IMR-90 (cell line): ENCODE measurements at regions of chr2 and their contacts with region 1.

Region 1: DNA sequence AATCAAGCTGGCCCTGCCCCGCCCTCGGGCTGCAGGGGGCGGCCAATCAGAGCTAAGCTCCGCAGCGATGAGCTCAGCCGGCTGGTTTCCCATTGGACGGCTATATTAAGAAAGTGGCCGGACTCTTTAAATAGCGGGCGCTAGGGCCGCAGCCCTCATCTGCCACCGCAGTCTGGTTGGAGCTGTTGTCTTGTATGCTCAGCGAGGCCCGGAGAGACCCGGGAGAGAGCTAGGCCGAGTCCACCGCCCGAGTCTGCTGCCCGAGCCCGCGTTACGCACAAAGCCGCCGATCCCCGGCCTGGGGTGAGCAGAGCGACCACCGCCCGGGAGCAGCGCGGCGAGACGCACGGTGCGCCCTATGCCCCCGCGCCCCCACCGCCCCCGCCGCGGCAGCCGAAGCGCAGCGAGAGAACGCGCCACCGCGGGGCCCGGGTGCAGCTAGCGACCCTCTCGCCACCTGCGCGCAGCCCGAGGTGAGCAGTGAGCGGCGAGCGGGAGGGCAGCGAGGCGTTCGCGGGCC is at the start of gene RHOB:
- DNase-seq: peak; percentile 98
- ATAC-seq: peak; percentile 88
- H3K4me3 ChIP-seq: peak within 1 kb of the TSS; percentile 86
- H3K27ac ChIP-seq: peak within 1 kb of the TSS; percentile 88
- H3K4me1 ChIP-seq: peaks cover 14% of the 10 kb centered on the region
- H3K27me3 ChIP-seq: no peaks in the 10 kb centered on the region
- CTCF ChIP-seq: no peak
- POLR2A ChIP-seq: peak; percentile 100
- RAD21 ChIP-seq: no peak
- total RNA-seq, gene RHOB: 112 and 151 TPM in 2 replicates

Region 2: GRCh38 chr2:19673213-19673791 is 773.7 kb before region 1 on chr2:
- CTCF ChIA-PET with region 1: no interaction called
- POLR2A ChIA-PET with region 1: no interaction called
- dilution Hi-C with region 1: no loop called
- in situ Hi-C with region 1: no loop called
- intact Hi-C with region 1: no loop called
- DNase-seq: peak; percentile 19
- ATAC-seq: peak; percentile 49; the same call in 1 of the 2 replicates
- H3K4me3 ChIP-seq: no peak overlapping the region
- H3K27ac ChIP-seq: no peak overlapping the region
- H3K4me1 ChIP-seq: no peaks in the 10 kb centered on the region
- H3K27me3 ChIP-seq: peaks cover 5% of the 10 kb centered on the region
- CTCF ChIP-seq: no peak
- POLR2A ChIP-seq: no peak
- RAD21 ChIP-seq: no peak

Region 3: DNA sequence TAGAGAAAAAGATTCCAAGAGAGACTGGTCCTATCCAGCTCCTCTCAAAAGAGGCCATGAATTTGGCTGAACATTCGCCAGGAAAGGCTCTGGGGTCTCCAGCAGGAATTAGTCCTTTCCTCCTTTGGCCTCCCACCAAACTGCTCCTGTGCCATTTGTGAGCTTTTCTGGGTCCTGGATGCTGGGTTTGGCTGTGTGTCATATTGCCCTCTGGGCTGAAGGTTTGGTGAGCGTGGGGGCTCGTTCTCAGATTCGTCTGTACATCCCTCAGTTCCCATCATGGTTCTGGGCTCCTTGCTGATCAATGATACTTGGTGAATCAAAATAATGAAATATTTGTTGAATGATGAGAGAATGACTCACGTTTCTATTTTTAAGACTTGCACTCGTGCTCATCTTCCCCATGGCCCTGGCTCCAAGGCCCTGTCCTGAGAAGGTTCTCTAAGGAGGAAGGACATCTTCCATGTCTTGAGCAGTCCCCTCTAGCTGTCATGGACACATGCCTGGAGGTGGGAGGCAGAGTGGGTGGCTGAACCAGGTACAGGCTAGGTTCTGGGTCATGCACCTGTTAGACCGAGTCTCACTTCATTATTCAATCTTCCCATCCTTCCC is 47.9 kb before region 1 on chr2:
- CTCF ChIA-PET with region 1: interaction called, 3 read pairs
- POLR2A ChIA-PET with region 1: interaction called, 14 read pairs
- dilution Hi-C with region 1: no loop called
- in situ Hi-C with region 1: no loop called
- intact Hi-C with region 1: no loop called
- DNase-seq: peak; percentile 68
- ATAC-seq: peak; percentile 63
- H3K4me3 ChIP-seq: no peak overlapping the region
- H3K27ac ChIP-seq: no peak overlapping the region
- H3K4me1 ChIP-seq: peaks cover 4% of the 10 kb centered on the region
- H3K27me3 ChIP-seq: peaks cover 7% of the 10 kb centered on the region; the same call in 1 of the 2 replicates
- CTCF ChIP-seq: no peak
- POLR2A ChIP-seq: no peak
- RAD21 ChIP-seq: no peak

Region 4: GRCh38 chr2:20490260-20491181 is 43.5 kb after region 1 on chr2:
- CTCF ChIA-PET with region 1: interaction called, 3 read pairs
- POLR2A ChIA-PET with region 1: interaction called, 5 read pairs
- dilution Hi-C with region 1: no loop called
- in situ Hi-C with region 1: loop called (anchors 5 kb)
- intact Hi-C with region 1: loop called (anchors 2 kb)
- DNase-seq: peak; percentile 72
- ATAC-seq: no peak
- H3K4me3 ChIP-seq: no peak overlapping the region
- H3K27ac ChIP-seq: no peak overlapping the region
- H3K4me1 ChIP-seq: peaks cover 10% of the 10 kb centered on the region
- H3K27me3 ChIP-seq: peaks cover 3% of the 10 kb centered on the region
- CTCF ChIP-seq: no peak
- POLR2A ChIP-seq: no peak
- RAD21 ChIP-seq: no peak

Region 5: GRCh38 chr2:20600756-20601325 is 153.9 kb after region 1 on chr2:
- CTCF ChIA-PET with region 1: interaction called, 3 read pairs
- POLR2A ChIA-PET with region 1: interaction called, 10 read pairs
- dilution Hi-C with region 1: no loop called
- in situ Hi-C with region 1: no loop called
- intact Hi-C with region 1: loop called (anchors 2 kb)
- DNase-seq: no peak
- ATAC-seq: no peak; the same call in 1 of the 2 replicates
- H3K4me3 ChIP-seq: no peak overlapping the region
- H3K27ac ChIP-seq: no peak overlapping the region
- H3K4me1 ChIP-seq: peaks cover 11% of the 10 kb centered on the region
- H3K27me3 ChIP-seq: no peaks in the 10 kb centered on the region
- CTCF ChIP-seq: peak; percentile 54
- POLR2A ChIP-seq: no peak
- RAD21 ChIP-seq: peak; percentile 49

Region 6: DNA sequence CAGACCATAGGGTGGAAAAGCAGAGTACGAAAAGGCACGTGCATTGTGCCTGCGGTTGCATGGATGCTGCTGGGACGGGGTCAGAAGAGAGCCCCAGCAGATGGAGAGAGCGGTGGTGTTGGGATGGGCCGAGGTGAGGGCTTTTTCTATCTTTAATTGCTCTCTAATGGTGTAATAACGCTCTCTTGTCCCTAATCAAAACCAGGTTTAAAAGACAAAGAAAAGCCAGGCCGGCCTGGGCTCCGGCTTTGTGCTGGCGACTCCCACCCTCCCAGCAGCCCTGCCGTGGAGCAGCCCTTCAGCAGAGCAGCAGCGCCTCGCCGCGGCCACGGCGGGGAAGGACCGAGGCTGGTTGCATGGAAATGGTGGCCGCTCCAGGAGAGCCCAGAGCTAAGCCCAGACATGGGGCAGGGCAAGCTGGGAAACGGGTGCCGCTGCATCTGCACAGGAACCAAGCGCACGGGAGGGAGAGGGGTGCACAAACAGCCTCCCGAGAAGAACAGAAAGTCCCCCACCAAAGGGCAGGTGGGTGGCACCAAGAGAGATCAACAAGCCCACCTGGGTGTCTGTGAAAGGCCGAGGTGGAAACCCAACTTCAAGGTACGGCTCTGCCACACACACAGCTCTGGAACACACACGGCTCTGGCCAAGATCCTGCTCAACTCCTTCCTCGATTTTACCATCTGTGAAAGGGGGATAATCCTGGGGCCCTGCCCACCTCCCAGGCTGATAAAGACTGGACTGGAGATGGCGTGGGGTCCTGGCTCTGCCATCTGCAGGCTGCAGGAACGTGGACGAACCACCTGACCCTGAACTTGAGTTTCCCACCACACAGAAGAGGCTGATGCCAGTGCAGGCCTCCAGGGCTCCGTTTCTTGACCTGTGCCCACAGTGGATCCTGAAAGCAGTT is 189.0 kb after region 1 on chr2:
- CTCF ChIA-PET with region 1: interaction called, 17 read pairs
- POLR2A ChIA-PET with region 1: interaction called, 10 read pairs
- dilution Hi-C with region 1: no loop called
- in situ Hi-C with region 1: loop called (anchors 5 kb)
- intact Hi-C with region 1: loop called (anchors 1 kb)
- DNase-seq: peak; percentile 71
- ATAC-seq: peak; percentile 99
- H3K4me3 ChIP-seq: no peak overlapping the region
- H3K27ac ChIP-seq: peak overlapping the region; percentile 41; the same call in 1 of the 2 replicates
- H3K4me1 ChIP-seq: peaks cover 11% of the 10 kb centered on the region
- H3K27me3 ChIP-seq: no peaks in the 10 kb centered on the region
- CTCF ChIP-seq: peak; percentile 99
- POLR2A ChIP-seq: peak; percentile 69
- RAD21 ChIP-seq: peak; percentile 100